ENCODE measurements at regions of chr6 and their contacts with region 1.

Region 1: GRCh38 chr6:27518881-27519795 is 46.2 kb upstream of the ZNF184 start:
- DNase-seq: peak; percentile 75
- ATAC-seq: peak; percentile 83
- H3K4me3 Mint-ChIP-seq: peak overlapping the region; percentile 80
- H3K27ac Mint-ChIP-seq: peak overlapping the region; percentile 80
- H3K4me1 Mint-ChIP-seq: peaks cover 15% of the 10 kb centered on the region
- H3K27me3 Mint-ChIP-seq: peaks cover 16% of the 10 kb centered on the region

Region 2: DNA sequence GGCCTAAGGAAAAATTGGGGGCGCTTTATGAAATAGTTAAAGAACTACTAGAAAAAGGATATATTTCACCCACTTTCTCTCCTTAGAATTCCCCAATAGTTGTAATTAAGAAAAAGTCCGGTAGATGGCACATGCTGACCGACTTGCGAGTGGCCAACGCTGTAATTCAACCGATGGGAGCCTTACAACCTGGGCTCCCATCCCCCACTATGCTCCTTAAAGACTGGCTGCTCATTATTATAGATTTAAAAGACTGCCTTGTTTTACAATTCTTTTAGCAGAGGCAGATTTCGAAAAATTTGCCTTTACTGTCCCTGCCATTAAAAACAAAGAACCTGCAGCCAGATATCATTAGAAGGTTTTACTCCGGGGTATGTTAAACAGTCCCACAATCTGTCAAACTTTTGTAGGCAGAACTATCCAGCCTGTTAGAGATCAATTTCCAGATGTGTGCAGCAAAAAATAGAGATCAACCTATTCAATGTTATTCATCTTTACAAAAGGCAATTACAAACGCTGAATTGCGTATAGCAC is 330.2 kb before region 1 on chr6:
- CTCF ChIA-PET with region 1: no interaction called
- POLR2A ChIA-PET with region 1: no interaction called
- intact Hi-C with region 1: loop called in 1 of 2 experiments (anchors 5 kb)
- DNase-seq: peak; percentile 75
- ATAC-seq: peak; percentile 89
- H3K4me3 Mint-ChIP-seq: peak overlapping the region; percentile 81
- H3K27ac Mint-ChIP-seq: peak overlapping the region; percentile 76
- H3K4me1 Mint-ChIP-seq: peaks cover 10% of the 10 kb centered on the region
- H3K27me3 Mint-ChIP-seq: peaks cover 2% of the 10 kb centered on the region

Region 3: GRCh38 chr6:27479319-27480182 is 39.6 kb before region 1 on chr6:
- CTCF ChIA-PET with region 1: no interaction called
- POLR2A ChIA-PET with region 1: no interaction called
- intact Hi-C with region 1: loop called in 1 of 2 experiments (anchors 1 kb)
- DNase-seq: peak; percentile 89
- ATAC-seq: peak; percentile 69
- H3K4me3 Mint-ChIP-seq: no peak overlapping the region
- H3K27ac Mint-ChIP-seq: no peak overlapping the region
- H3K4me1 Mint-ChIP-seq: peaks cover 6% of the 10 kb centered on the region
- H3K27me3 Mint-ChIP-seq: no peaks in the 10 kb centered on the region

Region 4: DNA sequence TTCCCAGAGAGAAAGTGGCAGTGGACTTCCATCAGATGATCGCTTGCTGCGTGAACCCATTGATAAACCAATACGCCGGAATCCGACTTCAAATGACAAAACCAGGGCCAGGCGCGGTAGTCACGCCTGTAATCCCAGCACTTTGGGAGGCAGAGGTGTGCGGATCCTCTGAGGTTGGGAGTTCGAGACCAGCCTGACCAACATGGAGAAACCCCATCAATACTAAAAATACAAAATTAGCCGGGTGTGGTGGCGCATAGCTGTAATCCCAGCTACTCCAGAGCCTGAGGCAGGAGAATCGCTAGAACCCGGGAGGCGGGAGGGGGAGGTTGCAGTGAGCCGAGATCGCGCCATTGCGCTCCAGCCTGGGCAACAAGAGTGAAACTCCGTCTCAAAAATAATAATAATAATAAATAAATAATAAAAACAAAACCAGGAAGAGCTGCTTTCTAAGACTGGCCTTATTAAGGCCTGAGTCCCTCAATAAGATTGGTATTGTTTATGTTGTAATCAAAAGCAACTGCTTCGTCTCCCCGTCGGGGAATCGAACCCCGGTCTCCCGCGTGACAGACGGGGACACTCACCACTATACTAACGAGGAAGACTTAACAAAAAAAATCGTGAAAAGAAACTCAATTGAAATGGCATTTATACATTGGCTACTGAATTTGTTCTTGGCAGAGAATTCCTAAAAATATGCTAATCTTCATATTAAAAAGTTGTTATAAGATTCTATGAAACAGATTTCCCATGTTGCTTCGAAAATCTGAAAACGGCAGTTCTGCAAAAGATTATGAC is 64.0 kb after region 1 on chr6:
- CTCF ChIA-PET with region 1: no interaction called
- POLR2A ChIA-PET with region 1: no interaction called
- intact Hi-C with region 1: loop called in 1 of 2 experiments (anchors 2 kb)
- DNase-seq: peak; percentile 79
- ATAC-seq: peak; percentile 55
- H3K4me3 Mint-ChIP-seq: peak overlapping the region; percentile 45
- H3K27ac Mint-ChIP-seq: no peak overlapping the region
- H3K4me1 Mint-ChIP-seq: no peaks in the 10 kb centered on the region
- H3K27me3 Mint-ChIP-seq: peaks cover 60% of the 10 kb centered on the region

Region 5: GRCh38 chr6:27795697-27796494 is 276.8 kb after region 1 on chr6:
- CTCF ChIA-PET with region 1: interaction called, 8 read pairs
- POLR2A ChIA-PET with region 1: no interaction called
- intact Hi-C with region 1: loop called in 1 of 2 experiments (anchors 1 kb)
- DNase-seq: peak; percentile 59
- ATAC-seq: peak; percentile 55
- H3K4me3 Mint-ChIP-seq: no peak overlapping the region
- H3K27ac Mint-ChIP-seq: peak overlapping the region; percentile 13
- H3K4me1 Mint-ChIP-seq: peaks cover 26% of the 10 kb centered on the region
- H3K27me3 Mint-ChIP-seq: peaks cover 6% of the 10 kb centered on the region

Measured in activated CD4-positive, alpha-beta T cell treated with anti-CD3 and anti-CD28 coated beads for 36 hours (primary cell).